Posterior vena cava (tissue), 2 donors: ENCODE measurements at regions of chr18 and their contacts with region 1.

Region 1: GRCh38 chr18:13481820-13482617 is 244.3 kb downstream of the FAM210A start:
- DNase-seq: no peak

Region 2: DNA sequence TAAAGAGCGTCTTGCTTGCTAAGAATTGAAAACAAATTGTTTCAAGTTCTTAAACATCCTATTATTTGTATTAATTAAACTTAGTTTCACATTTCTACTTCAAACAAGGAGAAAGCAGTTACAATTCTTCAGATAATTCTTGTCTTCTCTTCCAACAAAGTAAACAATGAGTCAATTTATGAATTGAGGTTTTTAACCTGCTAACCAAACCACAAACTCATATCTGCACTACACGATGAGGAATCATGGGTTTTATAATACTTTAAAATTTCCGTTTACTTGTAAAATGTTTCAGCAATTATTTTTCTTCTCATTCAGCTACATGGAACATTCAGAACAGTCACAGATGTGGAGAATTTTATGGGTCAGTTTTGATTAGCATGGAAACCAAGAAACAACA is 938.3 kb before region 1 on chr18:
- intact Hi-C with region 1: no loop called
- DNase-seq: no peak

Region 3: DNA sequence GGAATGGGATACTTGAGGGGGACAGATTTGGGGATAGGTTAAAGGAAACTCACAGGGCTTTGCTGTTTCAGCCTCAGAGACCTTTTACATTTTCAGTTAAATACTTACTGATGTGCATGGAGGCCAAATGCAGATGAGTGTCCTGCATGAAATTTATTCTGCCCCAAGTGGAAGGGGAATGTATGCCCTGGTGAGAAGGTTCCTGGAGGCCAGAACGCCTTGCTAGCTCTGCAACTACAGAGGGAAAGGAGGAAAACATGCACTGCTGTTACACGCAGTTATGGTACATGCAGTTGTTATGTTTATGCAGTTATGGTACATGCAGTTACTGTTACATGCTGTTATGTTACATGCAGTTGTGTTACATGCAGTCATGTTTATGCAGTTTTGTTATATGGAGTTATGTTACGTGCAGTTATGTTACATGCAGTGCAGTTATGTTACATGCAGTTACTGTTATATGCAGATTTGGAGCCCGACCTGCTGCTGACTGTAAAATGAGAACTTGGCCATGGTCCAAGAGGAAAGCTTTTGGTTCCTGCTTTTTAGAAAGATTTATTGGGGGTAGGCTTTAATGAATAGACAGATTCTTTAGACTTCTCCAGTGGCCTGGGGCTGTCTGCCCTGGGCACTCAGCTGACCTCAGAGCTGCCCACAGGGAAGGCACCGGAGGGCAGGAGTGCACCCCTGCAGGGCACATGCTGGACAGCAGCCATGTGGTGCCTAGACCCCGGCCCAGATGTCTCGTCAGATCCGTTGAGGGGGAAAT is 179.4 kb before region 1 on chr18:
- intact Hi-C with region 1: loop called in 1 of 2 experiments (anchors 10 kb)
- DNase-seq: peak; percentile 76

Region 4: DNA sequence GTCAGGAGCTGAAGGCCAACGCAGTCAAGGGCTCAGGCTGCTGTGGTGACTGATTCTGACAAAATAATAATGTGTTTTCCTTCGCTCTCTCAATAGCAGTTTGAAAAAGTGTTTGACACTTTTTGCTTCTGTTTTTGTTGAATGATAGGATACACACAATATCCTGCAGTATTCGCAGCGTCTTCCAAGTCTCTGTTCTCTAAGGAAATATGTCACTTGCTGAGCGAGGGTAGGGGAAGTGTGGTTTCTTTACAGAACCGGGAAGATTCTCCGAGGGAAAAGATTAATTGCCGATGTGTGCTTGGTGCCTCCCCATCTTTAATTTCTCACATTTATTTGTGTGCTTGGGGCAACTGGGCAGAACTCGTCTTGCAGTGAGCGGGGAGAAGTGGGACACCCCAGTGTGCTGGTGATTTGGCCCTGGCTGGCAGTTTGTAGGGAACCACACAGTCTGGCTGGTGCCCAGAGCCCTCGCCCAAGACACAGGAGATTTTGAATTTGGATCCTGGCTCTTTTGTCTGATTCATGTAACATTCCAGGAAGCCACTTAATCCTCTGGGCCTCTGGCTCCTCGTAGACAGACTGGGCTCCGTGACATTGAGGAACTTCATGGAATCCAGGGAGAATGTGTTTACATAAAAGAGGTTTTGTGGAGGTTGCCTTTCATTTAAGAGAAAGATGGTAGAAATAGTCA is 94.0 kb before region 1 on chr18:
- intact Hi-C with region 1: no loop called
- DNase-seq: no peak

Region 5: GRCh38 chr18:13539050-13539449 is 57.0 kb after region 1 on chr18:
- intact Hi-C with region 1: no loop called
- DNase-seq: no peak